ENCODE measurements at regions of chr1 and their contacts with region 1.

Region 1: GRCh38 chr1:109426278-109427170 is at the start of gene PSMA5:
- DNase-seq: peak; percentile 96 to 99
- ATAC-seq: peak; percentile 97 to 100 (median 98)
- H3K4me3 ChIP-seq: peak within 1 kb of the TSS; percentile 84
- H3K27ac ChIP-seq: peak within 1 kb of the TSS; percentile 90
- H3K4me1 ChIP-seq: peaks cover 33% of the 10 kb centered on the region
- H3K27me3 ChIP-seq: no peaks in the 10 kb centered on the region
- CTCF ChIP-seq: no peak
- total RNA-seq, gene PSMA5: 58.1 to 123 (median 94.6) TPM

Region 2: GRCh38 chr1:109441069-109441468 is 14.5 kb after region 1 on chr1:
- intact Hi-C with region 1: loop called in 1 of 2 experiments (anchors 1 kb)
- DNase-seq: no peak
- ATAC-seq: no peak
- H3K4me3 ChIP-seq: no peak overlapping the region
- H3K27ac ChIP-seq: no peak overlapping the region
- H3K4me1 ChIP-seq: peaks cover 12% of the 10 kb centered on the region
- H3K27me3 ChIP-seq: peaks cover 0 to 15% (median 2%) of the 10 kb centered on the region in 3 donors
- CTCF ChIP-seq: no peak

Region 3: DNA sequence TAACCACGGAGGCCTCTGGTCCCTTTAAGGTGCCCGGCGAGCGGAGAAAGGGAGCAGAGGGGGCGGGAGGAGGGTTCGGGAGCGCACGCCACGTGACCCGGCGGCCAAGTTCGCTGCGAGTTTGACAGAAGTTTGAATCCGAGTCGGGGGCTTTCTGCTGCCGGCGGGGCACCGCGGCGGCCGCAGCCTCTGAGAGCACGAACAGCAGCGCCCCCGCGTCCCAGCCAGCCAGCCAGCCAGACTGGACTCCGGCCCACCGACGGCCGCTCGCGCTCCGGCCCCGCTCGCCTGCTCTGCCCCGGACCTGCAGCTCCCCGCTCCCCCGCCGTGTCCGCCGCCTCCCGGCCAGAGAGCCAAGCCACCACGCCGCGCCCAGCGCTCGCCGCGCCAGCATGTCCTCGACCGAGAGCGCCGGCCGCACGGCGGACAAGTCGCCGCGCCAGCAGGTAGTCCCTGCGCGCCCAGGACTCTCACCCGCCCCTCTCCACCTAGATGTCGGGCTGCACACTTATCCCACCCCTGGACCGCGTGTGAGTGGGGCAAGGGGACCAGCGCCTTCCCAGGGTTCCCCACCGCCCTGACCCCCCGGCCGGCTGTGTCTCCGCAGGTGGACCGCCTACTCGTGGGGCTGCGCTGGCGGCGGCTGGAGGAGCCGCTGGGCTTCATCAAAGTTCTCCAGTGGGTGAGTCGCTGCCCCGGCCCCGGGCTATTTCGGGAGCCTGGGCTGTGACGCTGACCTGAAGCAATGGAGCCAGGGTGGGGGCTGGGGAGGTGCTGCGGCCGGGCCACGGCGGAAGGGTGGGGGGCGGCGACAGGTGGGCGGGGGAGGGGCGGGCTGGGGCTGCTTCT is 40.2 kb after region 1 on chr1 and contains the start of gene SYPL2:
- intact Hi-C with region 1: loop called (anchors 2 to 5 kb)
- DNase-seq: peak; percentile 86 to 95
- ATAC-seq: peak; percentile 85 to 89 (median 88)
- H3K4me3 ChIP-seq: peak within 1 kb of the TSS; percentile 87
- H3K27ac ChIP-seq: peak within 1 kb of the TSS; percentile 97
- H3K4me1 ChIP-seq: peaks cover 33% of the 10 kb centered on the region
- H3K27me3 ChIP-seq: no peaks in the 10 kb centered on the region
- CTCF ChIP-seq: no peak
- total RNA-seq, gene SYPL2: 125 to 203 (median 163) TPM

Region 4: GRCh38 chr1:109493805-109494539 is 67.4 kb after region 1 on chr1 and contains the start of gene CYB561D1:
- intact Hi-C with region 1: loop called in 1 of 2 experiments (anchors 5 kb)
- DNase-seq: peak; percentile 89 to 94
- ATAC-seq: peak; percentile 81 to 90 (median 85)
- H3K4me3 ChIP-seq: peak within 1 kb of the TSS; percentile 90
- H3K27ac ChIP-seq: peak within 1 kb of the TSS; percentile 77
- H3K4me1 ChIP-seq: peaks cover 34% of the 10 kb centered on the region
- H3K27me3 ChIP-seq: no peaks in the 10 kb centered on the region
- CTCF ChIP-seq: peak; percentile 92
- total RNA-seq, gene CYB561D1: 2.4 to 4.0 (median 3.7) TPM

Region 5: GRCh38 chr1:109595531-109595930 is 169.0 kb after region 1 on chr1:
- intact Hi-C with region 1: no loop called
- DNase-seq: no peak
- ATAC-seq: no peak
- H3K4me3 ChIP-seq: no peak overlapping the region
- H3K27ac ChIP-seq: no peak overlapping the region
- H3K4me1 ChIP-seq: no peaks in the 10 kb centered on the region
- H3K27me3 ChIP-seq: no peaks in the 10 kb centered on the region
- CTCF ChIP-seq: no peak